ENCODE measurements at regions of chr7 and their contacts with region 1.

Region 1: GRCh38 chr7:29588900-29589696 is 25.5 kb downstream of the PRR15 start:
- DNase-seq: peak; percentile 36
- H3K4me3 ChIP-seq: no peak overlapping the region
- H3K27ac ChIP-seq: no peak overlapping the region
- H3K4me1 ChIP-seq: no peaks in the 10 kb centered on the region
- H3K27me3 ChIP-seq: no peaks in the 10 kb centered on the region
- CTCF ChIP-seq: peak; percentile 85 to 91
- POLR2A ChIP-seq: no peak

Region 2: GRCh38 chr7:29496355-29497020 is 92.6 kb before region 1 on chr7:
- CTCF ChIA-PET with region 1: no interaction called
- POLR2A ChIA-PET with region 1: no interaction called
- dilution Hi-C with region 1: no loop called
- intact Hi-C with region 1: no loop called
- DNase-seq: no peak
- H3K4me3 ChIP-seq: no peak overlapping the region
- H3K27ac ChIP-seq: no peak overlapping the region
- H3K4me1 ChIP-seq: peaks cover 19% of the 10 kb centered on the region
- H3K27me3 ChIP-seq: no peaks in the 10 kb centered on the region
- CTCF ChIP-seq: no peak
- POLR2A ChIP-seq: no peak

Region 3: GRCh38 chr7:29552392-29552791 is 36.7 kb before region 1 on chr7:
- CTCF ChIA-PET with region 1: interaction called, 11 read pairs
- POLR2A ChIA-PET with region 1: no interaction called
- dilution Hi-C with region 1: no loop called
- intact Hi-C with region 1: no loop called
- DNase-seq: no peak
- H3K4me3 ChIP-seq: no peak overlapping the region
- H3K27ac ChIP-seq: no peak overlapping the region
- H3K4me1 ChIP-seq: no peaks in the 10 kb centered on the region
- H3K27me3 ChIP-seq: peaks cover 0 to 3% of the 10 kb centered on the region in 2 experiments
- CTCF ChIP-seq: no peak
- POLR2A ChIP-seq: no peak

Region 4: DNA sequence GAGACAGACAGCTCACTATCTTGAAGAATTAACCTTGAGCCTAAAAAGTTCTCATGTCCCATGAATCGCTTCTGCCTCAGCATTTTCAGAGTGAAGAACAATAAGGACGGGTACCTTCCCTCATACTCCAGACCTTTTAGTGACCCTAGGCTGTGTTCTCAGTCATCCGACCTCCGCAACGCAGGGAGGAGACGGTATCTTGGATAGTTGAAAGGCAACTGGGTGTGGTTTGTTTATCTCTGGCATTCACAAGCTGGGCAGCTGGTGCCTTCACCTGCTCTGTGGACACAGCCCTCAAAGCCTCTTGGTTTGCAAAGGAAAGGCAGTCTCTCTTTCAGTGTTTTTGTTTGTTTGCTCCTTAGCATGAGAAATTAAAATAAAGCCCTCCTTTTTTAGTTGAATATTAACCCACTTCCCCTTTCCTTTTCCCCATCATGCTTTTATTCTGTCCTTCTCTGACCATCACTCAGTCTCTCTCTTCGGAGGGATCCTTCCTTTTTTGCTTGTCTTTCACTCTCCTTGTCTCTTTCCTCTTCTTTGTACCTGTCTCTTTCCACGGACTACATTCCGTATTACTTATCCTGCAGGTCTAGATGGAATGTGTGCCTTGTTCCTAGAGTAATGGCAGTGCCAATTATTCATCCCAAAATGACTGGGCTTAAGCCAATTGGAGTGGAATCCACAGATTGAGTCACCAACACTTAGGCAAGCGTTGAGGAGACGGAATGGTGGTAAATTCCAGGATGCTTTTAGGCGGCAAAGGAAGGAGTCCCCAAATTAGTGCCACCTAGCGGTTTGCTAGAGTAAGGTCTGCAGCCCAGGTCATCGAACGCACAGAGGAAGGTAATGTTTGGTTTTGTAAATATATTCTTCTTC is 20.3 kb after region 1 on chr7:
- CTCF ChIA-PET with region 1: interaction called, 12 read pairs
- POLR2A ChIA-PET with region 1: no interaction called
- dilution Hi-C with region 1: no loop called
- intact Hi-C with region 1: no loop called
- DNase-seq: peak; percentile 17
- H3K4me3 ChIP-seq: no peak overlapping the region
- H3K27ac ChIP-seq: no peak overlapping the region
- H3K4me1 ChIP-seq: no peaks in the 10 kb centered on the region
- H3K27me3 ChIP-seq: no peaks in the 10 kb centered on the region
- CTCF ChIP-seq: peak; percentile 61 to 66
- POLR2A ChIP-seq: no peak